ENCODE measurements at regions of chr11 and their contacts with region 1.

Region 1: DNA sequence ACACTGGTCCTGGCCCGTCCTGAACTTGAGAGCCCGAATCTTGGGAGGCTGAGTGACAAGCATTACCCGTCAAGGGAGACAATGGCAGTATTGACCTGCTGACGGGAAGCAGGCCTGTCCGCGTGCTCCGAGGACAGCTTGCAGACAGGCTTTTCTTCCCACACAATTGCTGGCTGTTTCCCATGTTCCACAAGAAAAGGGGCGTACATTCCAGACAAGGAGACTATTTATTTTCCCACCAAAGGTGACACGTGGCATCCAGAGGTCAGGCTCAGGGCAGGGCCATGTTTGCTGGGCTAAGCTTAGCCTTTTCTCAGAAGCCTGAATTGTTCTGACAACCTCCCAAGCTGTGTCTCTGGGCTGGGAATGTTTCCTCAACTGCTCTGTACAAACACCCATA is 86.9 kb upstream of the SPON1 start:
- DNase-seq: no peak
- H3K4me3 ChIP-seq: no peak overlapping the region
- H3K27ac ChIP-seq: no peak overlapping the region
- H3K4me1 ChIP-seq: peaks cover 11% of the 10 kb centered on the region
- H3K27me3 ChIP-seq: peaks cover 3% of the 10 kb centered on the region
- CTCF ChIP-seq: no peak

Region 2: DNA sequence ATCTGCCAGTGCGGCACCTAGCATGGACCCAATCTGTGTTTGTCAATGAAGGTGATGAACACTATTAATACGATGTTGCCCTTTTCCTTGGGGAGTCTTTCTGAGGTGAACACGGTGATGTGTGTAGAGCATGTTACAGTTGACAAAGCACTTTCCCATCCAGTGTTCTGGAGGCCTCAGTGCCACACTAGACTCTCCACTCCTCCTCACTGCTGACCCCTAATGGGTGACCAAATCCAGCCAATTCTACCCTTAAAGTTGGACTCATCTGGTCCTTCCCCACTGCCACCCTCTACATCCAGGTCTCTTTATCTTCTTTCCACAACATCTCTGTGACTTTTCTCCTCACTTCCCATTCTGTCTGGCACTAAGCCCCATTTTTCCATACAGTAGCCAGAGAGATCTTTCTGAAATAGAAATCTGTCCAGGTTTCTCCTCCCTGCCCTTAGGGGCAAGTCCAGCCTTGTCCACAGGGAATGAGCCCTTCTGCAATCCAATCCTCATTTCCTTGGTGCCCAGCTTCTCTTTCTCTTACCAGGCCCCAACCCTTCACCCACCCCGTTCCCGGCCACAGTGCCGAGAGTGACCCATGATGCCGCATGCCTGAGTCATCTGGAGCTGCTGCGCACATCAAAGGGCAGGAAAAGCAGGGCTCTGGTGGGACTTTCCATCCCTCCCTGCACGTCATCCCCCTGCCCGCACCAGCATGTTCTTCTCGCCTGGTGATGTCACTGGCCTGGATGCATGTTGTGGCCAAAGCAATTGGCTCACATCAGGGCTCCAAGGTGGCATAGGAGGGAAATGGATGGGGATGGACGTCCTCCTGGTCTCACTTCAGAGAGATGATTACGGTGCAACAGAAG is 802.3 kb before region 1 on chr11:
- CTCF ChIA-PET with region 1: no interaction called
- dilution Hi-C with region 1: no loop called
- in situ Hi-C with region 1: no loop called
- intact Hi-C with region 1: no loop called
- DNase-seq: peak; percentile 100
- H3K4me3 ChIP-seq: no peak overlapping the region
- H3K27ac ChIP-seq: peak overlapping the region; percentile 88
- H3K4me1 ChIP-seq: peaks cover 40% of the 10 kb centered on the region
- H3K27me3 ChIP-seq: no peaks in the 10 kb centered on the region
- CTCF ChIP-seq: no peak

Region 3: DNA sequence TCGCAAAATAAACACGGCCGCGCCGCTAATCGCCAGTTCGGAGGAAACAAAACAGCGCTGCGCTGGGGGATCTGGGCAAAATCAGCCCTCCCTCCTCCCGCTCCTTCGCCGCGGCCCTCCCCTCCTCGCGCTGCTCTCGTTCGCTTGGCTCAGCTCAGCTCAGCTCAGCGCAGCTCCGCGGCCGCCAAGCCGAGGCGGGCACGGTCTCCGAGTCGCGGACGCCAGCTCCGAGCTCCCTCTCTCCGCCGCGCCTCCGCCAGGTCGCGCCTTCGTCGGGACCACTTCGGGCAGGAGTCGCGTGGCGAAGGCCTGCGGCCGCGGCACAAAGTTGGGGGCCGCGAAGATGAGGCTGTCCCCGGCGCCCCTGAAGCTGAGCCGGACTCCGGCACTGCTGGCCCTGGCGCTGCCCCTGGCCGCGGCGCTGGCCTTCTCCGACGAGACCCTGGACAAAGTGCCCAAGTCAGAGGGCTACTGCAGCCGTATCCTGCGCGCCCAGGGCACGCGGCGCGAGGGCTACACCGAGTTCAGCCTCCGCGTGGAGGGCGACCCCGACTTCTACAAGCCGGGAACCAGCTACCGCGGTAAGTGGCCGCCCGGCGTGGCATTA is 87.0 kb after region 1 on chr11 and contains the start of gene SPON1:
- CTCF ChIA-PET with region 1: no interaction called
- dilution Hi-C with region 1: loop called (anchors 5 kb)
- in situ Hi-C with region 1: no loop called
- intact Hi-C with region 1: no loop called
- DNase-seq: peak; percentile 27
- H3K4me3 ChIP-seq: no peak within 1 kb of the TSS
- H3K27ac ChIP-seq: no peak within 1 kb of the TSS
- H3K4me1 ChIP-seq: peaks cover 10% of the 10 kb centered on the region
- H3K27me3 ChIP-seq: peaks cover 42% of the 10 kb centered on the region
- CTCF ChIP-seq: no peak
- total RNA-seq, gene SPON1: 0.17 TPM in 1 of 2 donors, not detected in the other